GM10248 (cell line): ENCODE measurements at regions of chr5 and their contacts with region 1.

Region 1: DNA sequence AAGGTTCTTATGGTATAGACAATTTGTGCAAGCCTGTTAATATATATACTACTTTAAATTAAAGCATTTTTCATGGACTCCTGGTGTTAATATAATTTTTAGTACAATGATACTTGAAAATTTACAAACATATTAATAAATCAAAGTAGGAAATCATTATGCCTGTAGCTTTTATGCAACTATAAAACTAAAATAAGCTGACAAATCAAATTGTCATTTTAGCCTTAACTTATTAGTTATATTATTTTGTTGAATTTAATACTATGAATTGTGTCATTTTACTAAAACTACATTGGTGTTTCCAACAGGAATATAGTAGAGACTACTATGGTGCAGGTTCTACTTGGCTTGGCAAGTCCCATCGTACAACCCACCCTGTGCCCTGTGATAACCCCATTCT is 96.0 kb downstream of the MED10 start:
- DNase-seq: no peak
- CTCF ChIP-seq: no peak

Region 2: GRCh38 chr5:6269925-6270324 is 12.4 kb before region 1 on chr5:
- CTCF ChIA-PET with region 1: interaction called, 10 read pairs
- POLR2A ChIA-PET with region 1: no interaction called
- DNase-seq: no peak
- CTCF ChIP-seq: no peak

Region 3: GRCh38 chr5:6311568-6312501 is 29.5 kb after region 1 on chr5:
- CTCF ChIA-PET with region 1: no interaction called
- POLR2A ChIA-PET with region 1: no interaction called
- DNase-seq: no peak
- CTCF ChIP-seq: no peak